PC-3 (cell line): ENCODE measurements at regions of chr2 and their contacts with region 1.

Region 1: DNA sequence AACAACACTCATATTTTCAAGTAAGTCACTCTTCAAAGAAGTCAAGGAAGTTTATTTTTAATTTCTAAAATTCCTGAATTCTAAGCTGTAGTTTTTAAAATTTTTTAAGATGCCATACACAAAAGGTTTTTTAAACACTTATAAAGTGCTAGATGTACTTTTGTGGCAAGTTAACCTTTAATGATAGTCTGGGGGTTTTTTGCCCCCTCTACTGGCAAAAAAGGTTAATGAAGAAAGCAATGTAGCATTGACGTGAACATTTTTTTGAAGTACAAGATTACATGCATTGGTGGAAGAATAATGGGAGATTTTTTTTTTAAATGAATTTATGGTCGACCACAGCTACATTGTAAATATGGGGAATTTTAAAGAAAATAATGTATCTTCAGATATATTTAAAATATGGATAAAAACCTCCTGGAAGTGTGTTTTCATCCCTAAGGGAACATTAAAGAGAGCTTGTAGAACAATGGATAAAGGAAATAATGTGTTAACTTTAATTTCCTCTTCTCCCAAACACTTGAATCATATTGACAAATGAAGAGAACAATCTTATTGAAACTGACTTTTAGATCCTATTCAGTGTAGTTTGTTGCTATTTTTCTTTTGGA is 12.6 kb downstream of the ITPRID2 start:
- DNase-seq: peak; percentile 70
- ATAC-seq: 0 out of 2 replicates have a peak, but pooled peaks have one; percentile 43
- H3K4me3 ChIP-seq: no peak overlapping the region
- H3K27ac ChIP-seq: no peak overlapping the region
- H3K4me1 ChIP-seq: peaks cover 15% of the 10 kb centered on the region
- H3K27me3 ChIP-seq: no peaks in the 10 kb centered on the region
- CTCF ChIP-seq: peak; percentile 80

Region 2: GRCh38 chr2:181573140-181573736 is 330.9 kb before region 1 on chr2:
- CTCF ChIA-PET with region 1: no interaction called
- POLR2A ChIA-PET with region 1: no interaction called
- intact Hi-C with region 1: loop called (anchors 10 kb)
- DNase-seq: peak; percentile 65
- ATAC-seq: no peak; the same call in 1 of the 2 replicates
- H3K4me3 ChIP-seq: no peak overlapping the region
- H3K27ac ChIP-seq: no peak overlapping the region
- H3K4me1 ChIP-seq: 0 out of 2 replicates have a peak, but pooled peaks cover 7% of the 10 kb centered on the region
- H3K27me3 ChIP-seq: no peaks in the 10 kb centered on the region
- CTCF ChIP-seq: peak; percentile 75

Region 3: GRCh38 chr2:181738074-181738473 is 166.1 kb before region 1 on chr2:
- CTCF ChIA-PET with region 1: interaction called, 6 read pairs
- POLR2A ChIA-PET with region 1: no interaction called
- intact Hi-C with region 1: loop called (anchors 1 kb)
- DNase-seq: peak; percentile 58
- ATAC-seq: peak; percentile 65
- H3K4me3 ChIP-seq: no peak overlapping the region
- H3K27ac ChIP-seq: no peak overlapping the region
- H3K4me1 ChIP-seq: peaks cover 20% of the 10 kb centered on the region
- H3K27me3 ChIP-seq: no peaks in the 10 kb centered on the region
- CTCF ChIP-seq: peak; percentile 58

Region 4: GRCh38 chr2:181742922-181743722 is 161.0 kb before region 1 on chr2:
- CTCF ChIA-PET with region 1: interaction called, 6 read pairs
- POLR2A ChIA-PET with region 1: no interaction called
- intact Hi-C with region 1: loop called (anchors 1 kb)
- DNase-seq: peak; percentile 74
- ATAC-seq: peak; percentile 47
- H3K4me3 ChIP-seq: 0 out of 2 replicates have a peak overlapping the region, but pooled peaks have one; percentile 18
- H3K27ac ChIP-seq: peak overlapping the region; percentile 69
- H3K4me1 ChIP-seq: peaks cover 29% of the 10 kb centered on the region
- H3K27me3 ChIP-seq: no peaks in the 10 kb centered on the region
- CTCF ChIP-seq: peak; percentile 89

Region 5: DNA sequence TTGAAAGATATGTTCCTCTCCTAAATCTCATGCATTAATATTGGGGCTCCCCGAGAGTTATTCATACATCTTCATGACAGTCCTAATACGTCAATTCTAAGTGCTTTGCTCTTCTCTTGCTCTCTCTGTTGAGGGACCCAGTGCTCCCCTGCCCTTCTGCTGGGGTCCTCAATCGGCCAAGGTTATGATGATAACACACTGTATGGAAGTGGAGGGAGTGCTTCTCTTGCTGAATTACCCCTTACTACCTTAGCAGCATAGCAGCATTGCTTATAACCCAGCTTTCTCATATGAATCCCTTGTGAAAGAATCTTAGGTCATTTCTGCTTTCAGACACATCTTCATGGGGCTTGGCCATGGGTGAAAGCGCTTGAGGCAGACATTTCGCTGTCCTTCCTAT is 30.6 kb after region 1 on chr2:
- CTCF ChIA-PET with region 1: no interaction called
- POLR2A ChIA-PET with region 1: no interaction called
- intact Hi-C with region 1: no loop called
- DNase-seq: no peak
- ATAC-seq: no peak
- H3K4me3 ChIP-seq: no peak overlapping the region
- H3K27ac ChIP-seq: no peak overlapping the region
- H3K4me1 ChIP-seq: no peaks in the 10 kb centered on the region
- H3K27me3 ChIP-seq: no peaks in the 10 kb centered on the region
- CTCF ChIP-seq: no peak

Region 6: GRCh38 chr2:181953881-181954537 is 49.9 kb after region 1 on chr2:
- CTCF ChIA-PET with region 1: interaction called, 3 read pairs
- POLR2A ChIA-PET with region 1: no interaction called
- intact Hi-C with region 1: loop called (anchors 5 kb)
- DNase-seq: peak; percentile 83
- ATAC-seq: peak; percentile 42
- H3K4me3 ChIP-seq: peak overlapping the region; percentile 45
- H3K27ac ChIP-seq: peak overlapping the region; percentile 57
- H3K4me1 ChIP-seq: peaks cover 35% of the 10 kb centered on the region
- H3K27me3 ChIP-seq: no peaks in the 10 kb centered on the region
- CTCF ChIP-seq: peak; percentile 79

Region 7: GRCh38 chr2:182132605-182133004 is 228.5 kb after region 1 on chr2:
- CTCF ChIA-PET with region 1: interaction called, 3 read pairs
- POLR2A ChIA-PET with region 1: no interaction called
- intact Hi-C with region 1: loop called (anchors 5 kb)
- DNase-seq: peak; percentile 29
- ATAC-seq: peak; percentile 71
- H3K4me3 ChIP-seq: no peak overlapping the region
- H3K27ac ChIP-seq: no peak overlapping the region
- H3K4me1 ChIP-seq: peaks cover 11% of the 10 kb centered on the region
- H3K27me3 ChIP-seq: no peaks in the 10 kb centered on the region
- CTCF ChIP-seq: peak; percentile 54